Activated CD4-positive, alpha-beta T cell treated with anti-CD3 and anti-CD28 coated beads, Interleukin-2, amount 10 ng/mL, durations not matched to agents 24 days and 14 days (primary cell): ENCODE measurements at regions of chr19 and their contacts with region 1.

Region 1: DNA sequence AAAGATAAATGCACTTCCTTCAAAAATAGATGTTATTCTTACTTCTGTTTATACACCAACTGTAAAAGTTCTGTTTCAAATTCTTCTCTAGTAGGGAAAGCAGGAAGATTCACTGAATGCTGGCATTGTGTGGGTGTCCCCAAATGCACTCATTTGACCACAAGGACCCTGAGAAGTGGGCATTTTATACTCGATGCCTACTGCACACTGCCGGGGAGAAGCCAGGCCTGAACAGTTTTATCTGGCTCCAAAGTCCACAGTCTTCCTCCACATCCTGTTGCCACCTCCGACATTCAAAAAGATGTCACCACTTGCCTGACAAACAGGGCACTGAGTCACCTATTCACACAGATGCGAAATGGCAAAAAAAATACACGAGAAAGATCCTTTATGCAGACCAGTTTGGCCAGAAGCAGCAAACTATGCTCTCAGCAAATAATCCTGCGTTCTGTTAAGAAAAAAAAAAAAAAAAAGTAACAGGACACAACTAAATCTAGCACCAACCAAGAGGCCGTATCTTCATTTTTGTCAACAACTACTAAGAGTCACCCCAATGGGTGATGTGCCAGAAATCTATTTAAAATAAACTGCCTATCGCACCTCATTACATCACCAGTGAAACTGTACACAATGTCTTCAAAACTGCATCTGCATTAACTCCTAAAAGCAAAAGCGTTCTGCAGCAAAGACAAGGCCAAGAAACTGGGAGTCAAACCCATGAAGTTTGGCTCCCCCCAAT is 6.2 kb downstream of the ZC3H4 start:
- DNase-seq: peak; percentile 83
- H3K4me3 Mint-ChIP-seq: peak overlapping the region; percentile 65
- H3K27ac Mint-ChIP-seq: peak overlapping the region; percentile 100
- H3K4me1 Mint-ChIP-seq: peaks cover 56% of the 10 kb centered on the region
- H3K27me3 Mint-ChIP-seq: no peaks in the 10 kb centered on the region

Region 2: GRCh38 chr19:47094557-47095475 is 12.6 kb before region 1 on chr19:
- intact Hi-C with region 1: loop called (anchors 1 kb)
- DNase-seq: peak; percentile 88
- H3K4me3 Mint-ChIP-seq: peak overlapping the region; percentile 86
- H3K27ac Mint-ChIP-seq: peak overlapping the region; percentile 94
- H3K4me1 Mint-ChIP-seq: peaks cover 62% of the 10 kb centered on the region
- H3K27me3 Mint-ChIP-seq: no peaks in the 10 kb centered on the region